Calu3 (cell line): ENCODE measurements at regions of chr1 and their contacts with region 1.

Region 1: DNA sequence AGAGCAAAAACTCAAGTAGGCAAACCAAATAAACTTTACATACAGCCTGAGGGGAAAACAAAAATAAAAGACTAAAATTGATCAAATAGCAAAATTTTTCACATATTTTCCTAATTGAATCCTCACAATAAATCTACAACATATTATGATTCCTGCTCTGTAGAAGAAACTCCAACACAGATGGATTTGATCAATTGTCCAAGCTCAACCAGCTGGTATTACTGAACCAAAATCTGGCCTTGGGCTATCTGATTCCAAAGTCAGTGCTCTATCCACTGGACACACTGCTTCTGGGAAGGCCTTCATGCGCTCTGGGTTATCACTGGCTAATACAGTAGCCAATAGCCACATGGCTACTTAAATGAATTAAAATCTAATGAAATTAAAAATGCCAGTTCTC is 39.3 kb downstream of the PCNX2 start:
- DNase-seq: no peak
- H3K4me3 Mint-ChIP-seq: no peak overlapping the region
- H3K27ac Mint-ChIP-seq: no peak overlapping the region
- H3K4me1 Mint-ChIP-seq: peaks cover 51% of the 10 kb centered on the region
- H3K27me3 Mint-ChIP-seq: no peaks in the 10 kb centered on the region
- CTCF ChIP-seq: no peak

Region 2: GRCh38 chr1:233224311-233224710 is 31.9 kb before region 1 on chr1:
- CTCF ChIA-PET with region 1: no interaction called
- intact Hi-C with region 1: loop called (anchors 1 kb)
- DNase-seq: no peak
- H3K4me3 Mint-ChIP-seq: no peak overlapping the region
- H3K27ac Mint-ChIP-seq: no peak overlapping the region
- H3K4me1 Mint-ChIP-seq: no peaks in the 10 kb centered on the region
- H3K27me3 Mint-ChIP-seq: no peaks in the 10 kb centered on the region
- CTCF ChIP-seq: no peak

Region 3: GRCh38 chr1:233295237-233295974 is 39.2 kb after region 1 on chr1 and contains the start of gene PCNX2:
- CTCF ChIA-PET with region 1: interaction called, 3 read pairs
- intact Hi-C with region 1: loop called (anchors 5 kb)
- DNase-seq: peak; percentile 82
- H3K4me3 Mint-ChIP-seq: peak within 1 kb of the TSS; percentile 87
- H3K27ac Mint-ChIP-seq: peak within 1 kb of the TSS; percentile 63
- H3K4me1 Mint-ChIP-seq: peaks cover 35% of the 10 kb centered on the region
- H3K27me3 Mint-ChIP-seq: no peaks in the 10 kb centered on the region
- CTCF ChIP-seq: no peak
- total RNA-seq, gene PCNX2: 50.7 and 63.4 TPM in 2 replicates